PC-3 (cell line): ENCODE measurements at regions of chr4 and their contacts with region 1.

Region 1: DNA sequence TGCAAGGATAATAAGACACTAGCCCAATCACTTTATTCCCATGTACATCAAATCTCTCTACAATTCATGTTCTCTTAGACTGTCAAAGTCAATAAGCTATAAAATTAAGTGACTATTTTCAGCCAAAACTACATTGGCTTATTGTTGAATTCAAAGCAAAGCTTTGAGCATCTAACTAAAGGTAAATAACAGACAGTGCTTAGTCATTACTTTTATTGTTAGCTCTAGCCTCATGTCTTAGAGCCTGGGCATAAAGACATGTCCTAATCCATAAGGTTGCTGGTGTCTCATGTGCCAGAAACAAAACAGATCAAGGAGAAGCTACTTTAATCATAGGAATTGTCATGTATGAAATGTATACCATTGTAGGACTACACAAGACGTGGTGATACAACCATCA is 103.1 kb upstream of the UNC5C start:
- DNase-seq: peak; percentile 40
- ATAC-seq: peak; percentile 95
- H3K4me3 ChIP-seq: no peak overlapping the region
- H3K27ac ChIP-seq: peak overlapping the region; percentile 32
- H3K4me1 ChIP-seq: peaks cover 6% of the 10 kb centered on the region; the same call in 1 of the 2 replicates
- H3K27me3 ChIP-seq: no peaks in the 10 kb centered on the region
- CTCF ChIP-seq: no peak

Region 2: DNA sequence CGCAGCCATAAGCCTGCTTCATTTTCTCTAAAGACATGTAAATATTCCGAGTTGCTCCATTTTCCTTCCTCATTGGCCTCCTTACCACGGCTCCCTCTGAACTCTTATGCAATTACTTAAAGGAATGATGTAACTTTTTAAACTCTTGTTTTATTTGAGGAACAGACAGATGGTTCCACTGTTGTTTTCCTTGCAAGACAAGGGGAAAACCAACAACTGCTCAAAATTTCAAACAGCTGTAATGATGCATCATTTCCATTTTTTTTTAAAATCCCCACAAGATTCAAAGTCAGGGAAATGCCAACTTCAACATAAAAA is 435.6 kb before region 1 on chr4:
- CTCF ChIA-PET with region 1: no interaction called
- POLR2A ChIA-PET with region 1: no interaction called
- intact Hi-C with region 1: no loop called
- DNase-seq: no peak
- ATAC-seq: no peak
- H3K4me3 ChIP-seq: no peak overlapping the region
- H3K27ac ChIP-seq: no peak overlapping the region
- H3K4me1 ChIP-seq: no peaks in the 10 kb centered on the region
- H3K27me3 ChIP-seq: no peaks in the 10 kb centered on the region
- CTCF ChIP-seq: no peak

Region 3: GRCh38 chr4:95585016-95585695 is 66.7 kb before region 1 on chr4:
- CTCF ChIA-PET with region 1: no interaction called
- POLR2A ChIA-PET with region 1: no interaction called
- intact Hi-C with region 1: loop called (anchors 1 kb)
- DNase-seq: peak; percentile 93
- ATAC-seq: peak; percentile 83
- H3K4me3 ChIP-seq: no peak overlapping the region
- H3K27ac ChIP-seq: peak overlapping the region; percentile 64
- H3K4me1 ChIP-seq: peaks cover 17% of the 10 kb centered on the region
- H3K27me3 ChIP-seq: no peaks in the 10 kb centered on the region
- CTCF ChIP-seq: no peak

Region 4: GRCh38 chr4:95675623-95676022 is 23.7 kb after region 1 on chr4:
- CTCF ChIA-PET with region 1: no interaction called
- POLR2A ChIA-PET with region 1: no interaction called
- intact Hi-C with region 1: loop called (anchors 1 kb)
- DNase-seq: peak; percentile 47
- ATAC-seq: peak; percentile 86
- H3K4me3 ChIP-seq: no peak overlapping the region
- H3K27ac ChIP-seq: peak overlapping the region; percentile 80
- H3K4me1 ChIP-seq: 0 out of 2 replicates have a peak, but pooled peaks cover 5% of the 10 kb centered on the region
- H3K27me3 ChIP-seq: no peaks in the 10 kb centered on the region
- CTCF ChIP-seq: no peak

Region 5: DNA sequence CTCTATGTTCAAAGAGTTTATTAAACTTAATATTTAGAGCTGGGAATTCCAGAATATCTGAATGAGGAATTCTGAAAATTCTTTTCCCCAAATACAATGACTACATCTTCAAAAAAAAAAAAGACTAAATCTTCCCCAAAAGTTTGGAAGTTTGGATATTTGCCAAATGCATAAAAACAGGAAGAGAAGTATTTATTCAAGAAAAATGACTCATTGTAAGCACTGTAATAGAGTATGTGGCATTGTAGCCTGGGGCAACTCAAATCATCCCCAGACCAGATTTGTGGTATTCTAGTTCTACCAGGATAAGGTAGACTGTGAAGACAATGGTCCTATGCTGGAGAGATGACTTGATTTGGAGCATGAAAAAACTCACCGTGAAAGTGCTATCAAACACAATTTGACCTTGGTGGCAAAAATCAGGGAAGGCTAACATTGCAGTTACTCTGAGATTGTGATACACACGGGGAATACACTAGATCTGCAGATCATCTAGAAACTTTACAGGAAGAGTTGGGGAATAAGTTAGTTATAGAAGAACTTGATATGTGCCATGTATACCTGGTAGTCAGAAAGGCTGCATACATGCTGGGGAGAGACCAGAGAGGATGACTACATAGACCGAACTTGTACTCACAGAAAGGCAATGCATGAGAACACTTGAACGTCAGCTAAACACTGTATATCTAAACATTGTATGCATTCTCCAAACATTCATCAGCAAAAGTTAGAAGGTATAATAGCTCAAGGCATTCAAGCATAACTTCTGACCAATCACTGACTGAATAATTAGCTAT is 109.7 kb after region 1 on chr4:
- CTCF ChIA-PET with region 1: no interaction called
- POLR2A ChIA-PET with region 1: no interaction called
- intact Hi-C with region 1: no loop called
- DNase-seq: peak; percentile 92
- ATAC-seq: peak; percentile 98
- H3K4me3 ChIP-seq: no peak overlapping the region
- H3K27ac ChIP-seq: peak overlapping the region; percentile 48
- H3K4me1 ChIP-seq: peaks cover 33% of the 10 kb centered on the region
- H3K27me3 ChIP-seq: no peaks in the 10 kb centered on the region
- CTCF ChIP-seq: no peak